ENCODE measurements at regions of chr20 and their contacts with region 1.

Region 1: GRCh38 chr20:50790651-50791277 is 4.1 kb upstream of the BCAS4 start:
- DNase-seq: peak; percentile 83
- H3K4me3 Mint-ChIP-seq: no peak overlapping the region
- H3K27ac Mint-ChIP-seq: peak overlapping the region; percentile 88
- H3K4me1 Mint-ChIP-seq: peaks cover 22% of the 10 kb centered on the region
- H3K27me3 Mint-ChIP-seq: peaks cover 2% of the 10 kb centered on the region

Region 2: DNA sequence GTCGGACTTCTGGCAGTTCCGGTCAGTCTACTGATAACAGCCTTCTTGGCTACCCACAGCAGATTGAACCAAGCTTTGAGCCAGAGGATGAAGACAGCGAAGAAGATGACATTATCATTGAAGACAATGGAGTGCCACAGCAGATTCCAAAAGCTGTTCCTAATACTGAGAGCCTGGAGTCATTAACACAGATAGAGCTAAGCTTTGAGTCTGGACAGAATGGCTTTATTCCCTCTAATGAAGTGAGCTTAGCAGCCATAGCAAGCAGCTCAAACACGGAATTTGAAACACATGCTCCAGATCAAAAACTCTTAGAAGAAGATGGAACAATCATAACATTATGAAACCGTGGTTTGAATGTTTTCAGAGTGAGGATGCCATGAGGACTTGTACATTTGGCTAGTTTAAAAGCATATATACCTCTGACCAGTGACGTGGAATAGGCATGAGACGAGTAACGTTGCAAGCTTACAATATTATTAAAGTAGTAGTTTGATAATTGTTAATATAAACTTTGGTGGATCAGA is 40.6 kb before region 1 on chr20:
- CTCF ChIA-PET with region 1: interaction called, 12 read pairs
- POLR2A ChIA-PET with region 1: no interaction called
- DNase-seq: no peak
- H3K4me3 Mint-ChIP-seq: no peak overlapping the region
- H3K27ac Mint-ChIP-seq: no peak overlapping the region
- H3K4me1 Mint-ChIP-seq: peaks cover 24% of the 10 kb centered on the region
- H3K27me3 Mint-ChIP-seq: no peaks in the 10 kb centered on the region

Region 3: GRCh38 chr20:50815162-50815989 is 24.6 kb after region 1 on chr20:
- CTCF ChIA-PET with region 1: interaction called, 18 read pairs
- POLR2A ChIA-PET with region 1: no interaction called
- DNase-seq: peak; percentile 17
- H3K4me3 Mint-ChIP-seq: peak overlapping the region; percentile 51
- H3K27ac Mint-ChIP-seq: peak overlapping the region; percentile 81
- H3K4me1 Mint-ChIP-seq: peaks cover 52% of the 10 kb centered on the region
- H3K27me3 Mint-ChIP-seq: no peaks in the 10 kb centered on the region

Region 4: GRCh38 chr20:50891138-50891537 is 100.4 kb after region 1 on chr20:
- CTCF ChIA-PET with region 1: interaction called, 12 read pairs
- POLR2A ChIA-PET with region 1: no interaction called
- DNase-seq: no peak
- H3K4me3 Mint-ChIP-seq: no peak overlapping the region
- H3K27ac Mint-ChIP-seq: no peak overlapping the region
- H3K4me1 Mint-ChIP-seq: peaks cover 5% of the 10 kb centered on the region
- H3K27me3 Mint-ChIP-seq: no peaks in the 10 kb centered on the region

Region 5: DNA sequence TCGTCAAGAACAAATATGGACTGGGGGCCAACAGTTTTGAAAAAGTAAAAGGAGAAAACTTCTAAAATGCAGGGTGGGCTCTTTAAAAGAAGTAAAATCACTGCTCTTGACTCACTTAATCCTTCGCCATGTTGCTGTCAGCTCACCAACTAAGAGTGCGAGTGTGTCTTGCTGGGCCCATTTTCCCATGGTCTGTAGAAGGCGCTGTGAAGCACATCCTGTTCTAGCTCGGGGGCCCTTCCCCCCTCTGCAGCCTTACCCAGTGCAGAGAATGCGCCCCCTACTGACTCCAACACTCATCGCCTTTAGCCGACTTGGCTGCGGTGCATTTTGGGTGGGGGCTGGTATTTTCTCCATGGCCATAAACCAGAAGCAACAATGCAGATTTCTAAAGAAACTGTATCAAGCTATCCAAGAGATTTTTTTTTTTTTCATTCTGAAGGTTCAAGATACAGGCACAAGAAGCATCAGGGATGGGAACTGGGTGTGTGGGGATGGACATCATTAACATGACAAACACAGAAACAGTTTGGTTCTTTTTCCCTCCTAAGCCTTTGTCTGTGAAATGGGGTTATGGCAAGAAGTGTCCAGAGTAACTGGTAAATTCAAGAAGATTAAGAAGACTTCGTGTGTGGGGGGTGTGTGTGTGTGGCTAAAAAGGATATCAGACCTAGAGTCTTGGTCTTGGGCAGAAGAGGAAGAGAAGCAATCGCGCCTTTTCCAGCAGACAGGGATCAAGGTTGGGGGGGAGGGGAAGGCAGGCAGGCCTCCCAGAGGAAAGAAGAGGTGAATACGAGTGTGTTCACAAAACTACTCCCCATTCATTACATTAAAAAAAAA is 138.8 kb after region 1 on chr20:
- CTCF ChIA-PET with region 1: interaction called, 32 read pairs
- POLR2A ChIA-PET with region 1: interaction called, 8 read pairs
- DNase-seq: peak; percentile 97
- H3K4me3 Mint-ChIP-seq: peak overlapping the region; percentile 97
- H3K27ac Mint-ChIP-seq: peak overlapping the region; percentile 98
- H3K4me1 Mint-ChIP-seq: peaks cover 54% of the 10 kb centered on the region
- H3K27me3 Mint-ChIP-seq: no peaks in the 10 kb centered on the region

Region 6: GRCh38 chr20:50992733-50993457 is 202.1 kb after region 1 on chr20:
- CTCF ChIA-PET with region 1: interaction called, 10 read pairs
- POLR2A ChIA-PET with region 1: no interaction called
- DNase-seq: peak; percentile 62
- H3K4me3 Mint-ChIP-seq: no peak overlapping the region
- H3K27ac Mint-ChIP-seq: no peak overlapping the region
- H3K4me1 Mint-ChIP-seq: peaks cover 4% of the 10 kb centered on the region
- H3K27me3 Mint-ChIP-seq: peaks cover 6% of the 10 kb centered on the region

Measured in activated CD4-positive, alpha-beta T cell treated with anti-CD3 and anti-CD28 coated beads, Interleukin-2, amount 10 ng/mL, durations not matched to agents 7 days and 5 days (primary cell).